Right ventricle myocardium superior (tissue), 1 donor: ENCODE measurements at regions of chr4 and their contacts with region 1.

Region 1: GRCh38 chr4:169485791-169486742 is 126.3 kb downstream of the NEK1 start:
- DNase-seq: no peak
- ATAC-seq: peak; percentile 76

Region 2: DNA sequence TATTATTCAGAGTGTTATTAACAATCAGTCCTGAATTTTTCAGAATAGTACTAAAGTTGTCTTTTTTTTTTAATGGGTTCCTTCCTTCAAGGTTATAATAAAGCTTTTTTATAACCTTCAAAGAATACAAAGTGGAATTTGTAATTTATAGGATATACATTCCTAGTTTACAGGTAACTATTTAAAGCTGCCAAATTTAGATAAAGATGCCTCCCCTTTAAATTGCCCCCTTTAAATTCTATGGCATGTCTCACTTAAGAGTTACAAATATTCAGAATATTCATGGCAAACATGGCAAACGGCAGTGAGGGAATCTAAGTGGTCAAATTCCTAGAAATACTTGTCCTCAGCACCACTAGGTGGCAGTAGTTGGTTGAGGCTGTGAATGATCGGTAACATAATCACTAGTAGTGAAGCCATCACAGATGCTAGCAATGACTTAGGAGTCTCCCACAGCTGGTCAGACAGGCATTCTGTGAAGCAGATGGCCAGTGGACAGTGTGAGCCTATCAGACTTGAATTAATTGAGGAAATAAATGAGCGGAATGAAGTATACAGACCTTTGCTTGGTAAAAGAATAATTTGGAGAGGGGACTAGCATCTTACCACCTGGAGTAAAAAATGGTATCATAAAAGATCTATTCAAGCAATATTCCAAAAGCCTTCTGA is 562.4 kb before region 1 on chr4:
- intact Hi-C with region 1: loop called (anchors 10 kb)
- DNase-seq: no peak
- ATAC-seq: peak; percentile 40

Region 3: GRCh38 chr4:168995537-168996295 is 490.4 kb before region 1 on chr4:
- intact Hi-C with region 1: loop called (anchors 10 kb)
- DNase-seq: no peak
- ATAC-seq: peak; percentile 70

Region 4: DNA sequence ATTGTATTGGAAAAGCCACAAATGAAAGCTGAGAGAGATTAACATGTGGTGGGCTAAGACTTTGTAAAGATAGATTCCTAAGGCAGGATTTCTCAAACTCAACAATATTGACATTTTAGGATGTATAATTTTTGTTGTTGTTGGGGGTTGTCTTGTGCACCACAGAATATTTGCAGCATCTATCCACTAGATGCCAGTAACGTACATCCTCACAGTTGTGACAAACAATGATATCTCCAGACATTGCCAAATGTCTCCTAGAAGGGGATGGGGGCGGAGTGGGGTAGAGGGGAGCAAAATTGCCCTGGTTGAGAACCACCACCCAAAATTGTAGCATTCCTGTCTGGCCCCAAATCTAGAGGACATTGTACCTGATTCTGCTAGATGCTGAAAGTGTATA is 461.3 kb before region 1 on chr4:
- intact Hi-C with region 1: loop called (anchors 5 kb)
- DNase-seq: no peak
- ATAC-seq: peak; percentile 84

Region 5: GRCh38 chr4:169270810-169271691 is 215.0 kb before region 1 on chr4 and contains the start of gene SH3RF1:
- intact Hi-C with region 1: loop called (anchors 10 kb)
- DNase-seq: peak; percentile 94
- ATAC-seq: peak; percentile 97
- total RNA-seq, gene SH3RF1: 8.3 TPM